Ovary (tissue), 10 donors: ENCODE measurements at regions of chr11 and their contacts with region 1.

Region 1: DNA sequence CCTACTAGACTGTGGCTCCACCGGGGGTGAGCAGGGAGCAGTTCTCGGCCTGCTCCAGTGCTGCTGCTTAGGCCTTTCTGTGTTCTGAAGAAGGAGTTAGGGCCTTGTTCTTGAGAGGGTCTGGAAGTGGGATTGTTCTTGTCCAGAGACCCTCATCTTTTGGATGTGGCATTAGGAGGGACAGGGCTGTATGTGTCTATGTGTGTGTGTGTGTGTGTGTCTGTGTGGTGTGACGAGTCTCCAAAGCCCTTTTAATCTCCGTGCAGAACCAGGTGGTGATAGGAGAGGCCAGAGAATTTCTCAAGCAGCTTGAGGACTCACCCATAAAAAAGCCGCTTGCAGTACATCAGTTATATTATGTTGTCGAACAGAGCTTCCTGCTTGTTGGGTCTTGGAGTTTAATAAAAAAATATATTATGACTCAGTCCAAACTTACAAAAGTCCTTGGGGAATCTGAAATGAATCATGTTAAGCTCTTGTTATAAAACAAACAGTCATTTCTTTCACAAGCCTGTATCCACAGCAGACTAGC is 196.5 kb downstream of the TENM4 start:
- DNase-seq: peak in 1 of 5 donors; percentile 56
- H3K4me3 ChIP-seq: no peak overlapping the region
- H3K27ac ChIP-seq: peak overlapping the region; percentile 26 to 63
- H3K4me1 ChIP-seq: peaks cover 19% of the 10 kb centered on the region
- H3K27me3 ChIP-seq: no peaks in the 10 kb centered on the region
- CTCF ChIP-seq: no peak
- EP300 ChIP-seq: no peak
- POLR2A ChIP-seq: no peak

Region 2: GRCh38 chr11:79259402-79260199 is 15.3 kb after region 1 on chr11:
- intact Hi-C with region 1: loop called in 1 of 4 experiments (anchors 2 kb)
- DNase-seq: no peak
- H3K4me3 ChIP-seq: no peak overlapping the region
- H3K27ac ChIP-seq: no peak overlapping the region
- H3K4me1 ChIP-seq: peaks cover 8% of the 10 kb centered on the region
- H3K27me3 ChIP-seq: no peaks in the 10 kb centered on the region
- CTCF ChIP-seq: no peak
- EP300 ChIP-seq: no peak
- POLR2A ChIP-seq: no peak